HepG2 (cell line): ENCODE measurements at regions of chr11 and their contacts with region 1.

Region 1: GRCh38 chr11:78156105-78156830 is 16.8 kb upstream of the ALG8 start:
- DNase-seq: peak; percentile 95
- ATAC-seq: peak; percentile 98
- H3K4me3 ChIP-seq: peak overlapping the region in 1 of 3 experiments; percentile 45; a peak in 2 of 6 replicates
- H3K27ac ChIP-seq: peak overlapping the region; percentile 84
- H3K4me1 ChIP-seq: peaks cover 56% of the 10 kb centered on the region
- H3K27me3 ChIP-seq: no peaks in the 10 kb centered on the region
- CTCF ChIP-seq: 0 out of 2 replicates have a peak, but pooled peaks have one; percentile 5
- EP300 ChIP-seq: peak; percentile 58 to 95; a peak in 3 of 4 replicates
- POLR2A ChIP-seq: no peak
- RAD21 ChIP-seq: peak; percentile 24; the same call in 1 of the 2 replicates

Region 2: DNA sequence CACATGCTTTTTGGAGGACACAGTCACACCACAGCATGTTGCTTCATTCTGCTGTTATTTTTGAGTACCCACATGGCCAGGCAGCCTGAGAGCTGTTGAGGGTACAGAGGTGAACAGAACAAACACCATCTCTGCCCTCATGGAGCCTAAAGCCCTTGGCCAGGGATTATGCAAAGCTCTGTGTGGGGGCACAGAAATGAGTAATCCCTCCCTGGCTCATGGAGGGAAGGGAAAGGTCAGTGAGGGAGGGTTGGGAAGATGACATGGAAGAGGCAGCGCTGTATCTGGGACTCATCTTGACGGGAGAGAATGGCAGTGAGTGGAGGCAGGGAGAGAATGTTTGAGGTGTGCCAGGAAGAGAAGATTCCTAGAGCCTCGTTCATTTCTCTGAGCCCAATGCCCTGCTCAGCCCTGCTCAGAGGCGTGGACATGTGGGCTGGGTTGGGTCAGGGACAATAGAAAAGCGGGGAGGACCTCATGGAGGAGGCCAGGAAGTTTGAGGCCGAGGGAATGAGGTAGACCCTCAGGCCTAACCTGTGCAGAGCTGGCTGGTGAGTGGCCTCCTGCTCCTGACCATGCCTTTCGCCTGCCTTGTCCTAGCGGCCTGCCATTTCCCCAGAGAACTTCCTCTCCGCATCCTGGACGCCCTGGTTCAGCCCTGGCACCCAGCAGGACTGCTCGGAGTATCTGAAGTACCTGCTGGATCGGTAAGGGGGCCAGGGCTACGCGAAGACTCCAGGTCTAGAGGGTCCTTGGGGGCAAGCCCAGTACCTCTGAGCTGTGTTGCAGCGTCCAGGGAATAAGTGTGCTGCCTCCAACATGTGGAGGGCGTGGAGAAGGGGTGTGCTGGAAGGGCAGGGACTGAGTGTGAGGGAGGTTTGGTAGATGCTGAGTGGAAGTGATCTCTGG is 52.2 kb after region 1 on chr11:
- CTCF ChIA-PET with region 1: no interaction called
- POLR2A ChIA-PET with region 1: no interaction called
- in situ Hi-C with region 1: no loop called
- intact Hi-C with region 1: loop called (anchors 1 kb)
- DNase-seq: peak; percentile 27
- ATAC-seq: peak; percentile 67
- H3K4me3 ChIP-seq: no peak overlapping the region
- H3K27ac ChIP-seq: peak overlapping the region; percentile 25
- H3K4me1 ChIP-seq: peaks cover 22% of the 10 kb centered on the region
- H3K27me3 ChIP-seq: no peaks in the 10 kb centered on the region
- CTCF ChIP-seq: no peak
- EP300 ChIP-seq: no peak
- POLR2A ChIP-seq: no peak
- RAD21 ChIP-seq: no peak